ENCODE measurements at regions of chr6 and their contacts with region 1.

Region 1: GRCh38 chr6:116217069-116217468 is 36.8 kb downstream of the TSPYL4 start:
- DNase-seq: peak in 4 of 5 donors; percentile 35 to 51 (median 38)
- H3K4me3 ChIP-seq: no peak overlapping the region
- H3K4me3 Mint-ChIP-seq: no peak overlapping the region
- H3K27ac ChIP-seq: no peak overlapping the region
- H3K27ac Mint-ChIP-seq: peak overlapping the region in 3 of 7 donors; percentile 18 to 80 (median 68)
- H3K4me1 ChIP-seq: no peaks in the 10 kb centered on the region
- H3K4me1 Mint-ChIP-seq: peaks cover 0 to 4% (median 2%) of the 10 kb centered on the region in 4 donors
- H3K27me3 ChIP-seq: no peaks in the 10 kb centered on the region
- H3K27me3 Mint-ChIP-seq: no peaks in the 10 kb centered on the region

Region 2: GRCh38 chr6:115830895-115831294 is 386.2 kb before region 1 on chr6:
- CTCF ChIA-PET with region 1: no interaction called
- POLR2A ChIA-PET with region 1: no interaction called
- intact Hi-C with region 1: no loop called
- DNase-seq: no peak
- H3K4me3 ChIP-seq: no peak overlapping the region
- H3K4me3 Mint-ChIP-seq: no peak overlapping the region
- H3K27ac ChIP-seq: no peak overlapping the region
- H3K27ac Mint-ChIP-seq: no peak overlapping the region
- H3K4me1 ChIP-seq: no peaks in the 10 kb centered on the region
- H3K4me1 Mint-ChIP-seq: no peaks in the 10 kb centered on the region
- H3K27me3 ChIP-seq: no peaks in the 10 kb centered on the region
- H3K27me3 Mint-ChIP-seq: no peaks in the 10 kb centered on the region

Region 3: GRCh38 chr6:116206231-116206903 is 10.7 kb before region 1 on chr6:
- CTCF ChIA-PET with region 1: interaction called, 11 read pairs
- POLR2A ChIA-PET with region 1: no interaction called
- intact Hi-C with region 1: no loop called
- DNase-seq: no peak
- H3K4me3 ChIP-seq: no peak overlapping the region
- H3K4me3 Mint-ChIP-seq: no peak overlapping the region
- H3K27ac ChIP-seq: no peak overlapping the region
- H3K27ac Mint-ChIP-seq: no peak overlapping the region
- H3K4me1 ChIP-seq: no peaks in the 10 kb centered on the region
- H3K4me1 Mint-ChIP-seq: peaks cover 0 to 3% (median 0%) of the 10 kb centered on the region in 4 donors
- H3K27me3 ChIP-seq: no peaks in the 10 kb centered on the region
- H3K27me3 Mint-ChIP-seq: no peaks in the 10 kb centered on the region

Region 4: DNA sequence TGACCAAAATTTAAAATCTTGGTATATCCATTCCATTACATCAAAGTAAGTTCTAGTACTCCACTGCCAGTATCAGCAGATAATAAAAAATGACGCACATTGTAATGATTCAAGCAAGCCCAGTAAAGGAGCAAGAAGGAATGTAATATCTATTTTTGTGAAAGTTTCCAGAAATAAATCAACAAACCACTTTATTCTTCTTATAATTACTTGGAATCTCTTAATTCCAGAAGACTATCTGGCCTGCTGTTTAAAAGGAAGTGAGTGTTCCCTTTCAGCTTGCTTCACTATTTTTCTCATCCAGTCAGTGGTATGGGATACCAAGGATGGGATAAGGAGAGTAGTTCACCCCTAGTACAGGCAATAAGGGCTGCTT is 111.4 kb after region 1 on chr6:
- CTCF ChIA-PET with region 1: no interaction called
- POLR2A ChIA-PET with region 1: no interaction called
- intact Hi-C with region 1: no loop called
- DNase-seq: no peak
- H3K4me3 ChIP-seq: no peak overlapping the region
- H3K4me3 Mint-ChIP-seq: no peak overlapping the region
- H3K27ac ChIP-seq: no peak overlapping the region
- H3K27ac Mint-ChIP-seq: no peak overlapping the region
- H3K4me1 ChIP-seq: no peaks in the 10 kb centered on the region
- H3K4me1 Mint-ChIP-seq: no peaks in the 10 kb centered on the region
- H3K27me3 ChIP-seq: no peaks in the 10 kb centered on the region
- H3K27me3 Mint-ChIP-seq: no peaks in the 10 kb centered on the region